Motor neuron (in vitro differentiated cells): ENCODE measurements at regions of chr2 and their contacts with region 1.

Region 1: DNA sequence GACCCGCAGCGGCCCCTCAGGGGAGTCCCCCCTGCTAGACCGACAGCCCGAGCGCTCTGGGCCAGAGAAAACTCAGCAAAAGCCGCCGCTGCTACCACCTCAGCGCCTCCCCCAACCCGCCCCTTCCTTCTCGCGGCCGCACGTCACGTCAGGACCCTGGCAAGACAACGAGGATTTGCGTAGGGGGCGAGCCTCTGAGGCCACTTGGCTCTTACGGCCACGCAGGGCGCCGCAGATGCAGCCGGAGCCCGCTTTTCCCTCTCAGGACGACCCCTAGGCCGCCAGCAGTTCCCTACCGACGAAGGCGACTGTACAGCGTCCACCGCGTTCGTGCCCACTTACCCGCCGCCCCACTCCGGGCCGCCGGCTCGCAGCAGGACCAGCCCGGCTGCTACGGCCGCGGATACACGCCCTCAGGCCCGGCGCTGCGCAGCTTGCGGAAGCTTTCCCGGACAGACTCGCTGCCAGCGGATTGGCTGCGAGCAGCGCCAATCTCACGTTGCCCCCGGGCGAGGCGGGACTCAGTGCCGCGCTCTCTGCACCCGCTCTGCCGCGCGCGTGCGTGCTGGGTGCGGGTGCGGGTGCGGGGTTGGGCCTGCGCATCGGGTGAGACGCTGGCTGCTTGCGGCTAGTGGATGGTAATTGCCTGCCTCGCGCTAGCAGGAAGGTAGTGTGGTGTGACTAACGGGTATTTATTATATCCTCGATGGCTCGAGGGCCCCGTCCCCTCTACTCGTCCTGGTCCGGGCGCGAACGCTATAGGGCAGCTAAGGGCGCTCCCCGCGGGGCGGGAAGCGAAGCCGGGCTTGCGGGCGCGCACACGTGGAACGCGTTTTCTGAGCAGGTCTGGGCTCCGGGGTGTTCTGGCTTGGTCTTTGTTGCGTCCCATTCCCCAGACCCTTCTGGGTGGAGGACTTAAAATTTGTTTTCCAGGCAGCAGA is at the starts of genes ORMDL1 and PMS1:
- ATAC-seq: peak; percentile 88 to 95 (median 92)
- H3K4me3 ChIP-seq: peak within 1 kb of the TSS; percentile 70 to 91 (median 82)
- H3K27ac ChIP-seq: peak within 1 kb of the TSS; percentile 98 to 99
- H3K4me1 ChIP-seq: peaks cover 7 to 15% of the 10 kb centered on the region in 2 donors
- total RNA-seq, gene ORMDL1: 44.2 to 115 (median 72.9) TPM
- total RNA-seq, gene PMS1: 22.6 to 37.4 (median 25.9) TPM

Region 2: DNA sequence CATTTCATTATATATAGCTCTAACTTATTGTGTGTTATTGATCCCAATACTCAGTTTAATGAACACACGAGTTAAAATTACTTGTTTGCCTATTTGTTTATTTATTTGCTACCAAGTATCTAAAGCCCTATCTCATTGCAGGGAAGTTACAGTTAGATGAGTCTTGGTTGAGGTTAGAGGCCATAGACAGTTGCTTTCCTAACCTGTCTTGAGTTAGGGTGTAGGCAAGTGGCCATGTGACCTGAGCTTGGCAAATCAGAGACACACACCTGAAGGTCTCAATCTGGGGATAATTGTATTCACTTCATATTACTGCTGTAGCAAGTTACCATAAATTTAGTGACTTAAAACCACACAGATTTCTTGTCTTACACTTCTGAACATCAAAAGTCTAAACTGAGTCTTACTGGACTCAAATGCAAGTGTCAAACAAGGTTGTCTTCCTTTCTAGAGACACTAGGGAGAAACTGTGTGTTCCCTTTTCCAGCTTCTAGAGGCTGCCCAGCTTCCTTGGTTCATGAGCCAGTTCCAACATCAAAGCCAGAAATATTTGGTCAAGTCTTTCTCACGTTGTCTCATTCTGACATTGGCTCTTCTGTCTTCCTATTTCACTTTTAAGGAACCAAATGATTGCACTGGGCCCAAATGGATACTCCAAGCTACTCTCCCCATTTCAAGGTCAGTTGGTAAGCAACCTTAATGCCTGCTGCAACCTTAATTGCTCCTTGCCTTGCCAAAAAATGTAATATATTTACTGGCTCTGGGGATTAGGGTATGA is 770.3 kb before region 1 on chr2:
- in situ Hi-C with region 1: no loop called
- ATAC-seq: peak in 3 of 8 experiments; percentile 4
- H3K4me3 ChIP-seq: no peak overlapping the region
- H3K27ac ChIP-seq: no peak overlapping the region
- H3K4me1 ChIP-seq: no peaks in the 10 kb centered on the region

Region 3: GRCh38 chr2:190031971-190032618 is 247.9 kb after region 1 on chr2:
- in situ Hi-C with region 1: loop called in 1 of 9 experiments (anchors 25 kb)
- ATAC-seq: no peak
- H3K4me3 ChIP-seq: no peak overlapping the region
- H3K27ac ChIP-seq: no peak overlapping the region
- H3K4me1 ChIP-seq: no peaks in the 10 kb centered on the region

Region 4: DNA sequence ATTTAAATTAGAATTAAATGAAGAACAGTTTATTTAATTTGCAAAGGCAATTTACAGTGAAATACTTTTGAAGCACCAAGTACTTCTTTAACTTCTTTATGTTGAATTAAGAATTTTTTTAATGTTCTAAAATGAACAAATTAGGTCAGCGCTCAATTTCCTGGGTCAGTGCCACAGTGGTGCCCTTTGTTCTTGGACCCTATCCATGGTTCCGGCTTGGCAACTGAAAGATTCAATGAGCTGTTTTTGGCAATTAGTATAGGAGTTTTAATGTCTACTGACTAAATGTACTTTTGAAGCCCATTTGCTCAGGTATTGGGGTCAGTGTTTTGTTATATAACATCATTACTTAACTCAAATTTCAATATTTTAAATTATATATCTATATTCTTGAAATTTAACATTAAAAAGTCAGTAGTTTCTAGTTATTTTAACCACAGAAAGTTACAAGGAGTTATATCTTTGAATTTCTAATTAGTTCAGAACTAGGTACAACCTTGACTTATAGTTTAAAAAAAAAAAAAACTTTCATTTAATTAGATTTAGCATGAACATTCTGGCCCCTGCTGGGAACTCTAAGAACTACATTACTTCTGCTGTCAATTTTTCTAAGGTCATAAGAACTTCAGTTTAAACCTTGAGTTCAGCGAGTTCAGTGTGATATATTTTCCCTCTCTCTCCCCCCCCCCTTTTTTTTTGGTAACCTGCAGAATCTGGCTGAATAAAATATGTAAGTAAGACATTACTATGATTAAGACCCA is 285.9 kb after region 1 on chr2:
- in situ Hi-C with region 1: loop called in 2 of 9 experiments (anchors 25 kb)
- ATAC-seq: peak in 2 of 8 experiments; percentile 29 to 48
- H3K4me3 ChIP-seq: no peak overlapping the region
- H3K27ac ChIP-seq: no peak overlapping the region
- H3K4me1 ChIP-seq: no peaks in the 10 kb centered on the region

Region 5: DNA sequence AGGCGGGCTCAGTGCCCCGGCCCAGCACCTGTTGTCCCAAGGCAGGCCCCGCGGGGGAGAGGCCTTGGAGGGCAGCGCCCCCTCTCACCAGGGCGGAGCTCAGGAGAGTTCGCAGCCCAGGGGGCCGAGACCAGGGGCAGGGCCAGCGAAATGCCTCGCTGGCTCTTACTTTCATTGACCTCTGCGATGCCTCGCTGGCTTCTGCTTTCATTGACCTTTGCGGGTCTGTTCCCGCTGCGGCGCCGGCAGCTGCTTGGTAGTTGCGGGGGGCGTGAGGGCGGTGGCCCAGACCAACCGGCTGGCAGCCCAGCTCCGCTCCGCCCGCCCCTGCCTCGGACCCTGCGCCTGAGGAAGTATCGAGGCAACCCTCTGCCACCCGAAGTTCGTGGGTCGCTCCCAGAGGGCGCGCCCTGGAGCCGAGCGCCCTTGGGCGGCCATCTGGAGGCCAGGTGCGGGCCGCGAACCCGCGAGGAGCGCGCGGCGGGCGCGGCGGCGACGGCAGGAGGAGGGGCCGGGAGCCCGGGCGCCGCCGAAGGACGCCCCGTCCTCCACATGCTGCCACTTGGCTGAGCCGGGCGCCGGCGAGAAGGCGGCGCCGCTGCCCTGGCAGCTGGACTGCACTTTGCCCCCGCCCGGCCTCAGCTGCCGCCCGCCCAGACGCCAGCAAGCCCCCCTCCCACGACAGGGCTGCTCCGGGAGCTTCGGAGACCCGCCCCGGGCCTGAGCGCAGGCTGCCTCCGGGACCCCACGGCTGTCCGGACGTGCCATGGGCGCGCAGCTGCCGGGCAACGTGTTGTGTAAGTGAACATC is 396.3 kb after region 1 on chr2:
- in situ Hi-C with region 1: no loop called
- ATAC-seq: peak; percentile 78 to 87 (median 83)
- H3K4me3 ChIP-seq: peak overlapping the region; percentile 32 to 56 (median 39)
- H3K27ac ChIP-seq: no peak overlapping the region
- H3K4me1 ChIP-seq: peaks cover 0 to 6% of the 10 kb centered on the region in 2 donors